ENCODE measurements at regions of chr6 and their contacts with region 1.

Region 1: DNA sequence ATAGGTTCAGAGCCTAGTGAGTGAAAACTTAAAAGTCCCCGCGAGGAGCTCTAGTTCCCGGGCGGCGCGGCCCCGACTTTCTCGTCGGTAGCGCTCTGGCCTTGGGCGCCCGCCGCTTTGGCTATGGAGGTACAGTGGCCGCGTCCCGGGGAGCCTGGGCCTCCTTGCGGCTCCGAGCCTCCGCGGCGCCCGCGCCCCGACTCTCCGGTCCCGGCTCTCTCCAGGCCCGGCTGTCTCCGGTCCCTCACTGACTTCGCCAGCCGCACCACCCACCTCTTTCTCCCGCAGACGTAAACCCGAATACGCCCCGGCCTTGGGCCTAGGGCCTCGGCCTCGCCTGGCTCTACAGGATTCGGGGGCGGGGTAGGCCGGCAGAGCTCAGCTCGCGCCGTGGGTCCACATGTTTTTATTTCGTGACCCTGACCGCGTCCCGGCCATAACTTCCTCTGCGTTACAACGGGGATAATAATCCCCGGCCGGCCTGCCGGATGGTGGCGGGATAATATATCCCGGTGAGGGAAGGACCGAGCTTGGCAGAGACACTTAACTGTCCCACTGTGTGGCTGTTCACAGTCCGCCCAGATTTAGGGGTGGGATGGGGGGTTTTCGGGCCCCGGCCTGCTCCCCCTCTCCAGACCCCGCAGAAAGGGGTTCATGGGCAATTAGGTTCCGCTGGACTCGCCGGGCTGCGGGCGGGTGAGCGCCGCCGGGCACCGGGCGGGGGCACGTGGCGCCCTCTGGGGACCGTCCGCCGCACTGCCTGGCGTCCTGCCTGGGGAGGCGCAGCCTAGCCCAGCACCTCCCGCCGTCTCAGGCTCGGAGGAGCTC is 10.0 kb upstream of the TBX18 start:
- DNase-seq: peak; percentile 73
- H3K4me3 ChIP-seq: peak overlapping the region; percentile 60
- H3K27ac ChIP-seq: peak overlapping the region; percentile 73
- H3K4me1 ChIP-seq: no peaks in the 10 kb centered on the region
- H3K27me3 ChIP-seq: peaks cover 54% of the 10 kb centered on the region
- CTCF ChIP-seq: peak; percentile 63; the same call in 1 of the 2 replicates

Region 2: GRCh38 chr6:83859410-83860358 is 914.7 kb before region 1 on chr6 and contains the start of gene CYB5R4:
- CTCF ChIA-PET with region 1: no interaction called
- POLR2A ChIA-PET with region 1: no interaction called
- intact Hi-C with region 1: loop called (anchors 10 kb)
- DNase-seq: peak; percentile 95
- H3K4me3 ChIP-seq: peak within 1 kb of the TSS; percentile 80
- H3K27ac ChIP-seq: peak within 1 kb of the TSS; percentile 67
- H3K4me1 ChIP-seq: peaks cover 12% of the 10 kb centered on the region
- H3K27me3 ChIP-seq: peaks cover 4% of the 10 kb centered on the region
- CTCF ChIP-seq: peak; percentile 73
- total RNA-seq, gene CYB5R4: 23.8 and 26.2 TPM in 2 replicates

Measured in A673 (cell line).